ENCODE measurements at regions of chr1 and their contacts with region 1.

Region 1: DNA sequence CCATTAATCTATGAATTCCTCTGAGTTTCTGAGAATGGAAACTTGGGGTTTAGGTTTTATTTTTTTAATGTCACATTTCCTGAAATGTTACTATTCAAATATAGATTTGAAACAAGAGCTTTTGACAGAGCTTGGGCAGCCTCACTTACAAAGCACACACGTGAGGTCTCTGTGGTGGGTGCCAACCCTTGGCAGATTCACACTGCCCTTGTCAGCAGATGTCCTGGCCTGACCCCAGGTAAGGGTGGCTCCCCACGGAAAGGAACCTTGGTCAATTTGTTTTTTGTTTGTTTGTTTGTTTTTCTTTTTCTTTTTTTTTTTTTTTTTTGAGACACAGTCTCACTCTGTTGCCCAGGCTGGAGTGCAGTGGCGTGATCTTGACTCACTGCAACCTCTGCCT is 53.5 kb downstream of the FAAP20 start:
- DNase-seq: no peak
- H3K4me3 Mint-ChIP-seq: no peak overlapping the region
- H3K27ac Mint-ChIP-seq: no peak overlapping the region
- H3K4me1 Mint-ChIP-seq: peaks cover 10% of the 10 kb centered on the region
- H3K27me3 Mint-ChIP-seq: no peaks in the 10 kb centered on the region

Region 2: GRCh38 chr1:2025534-2025981 is 115.5 kb before region 1 on chr1:
- CTCF ChIA-PET with region 1: no interaction called
- POLR2A ChIA-PET with region 1: no interaction called
- intact Hi-C with region 1: no loop called
- DNase-seq: no peak
- H3K4me3 Mint-ChIP-seq: no peak overlapping the region
- H3K27ac Mint-ChIP-seq: no peak overlapping the region
- H3K4me1 Mint-ChIP-seq: no peaks in the 10 kb centered on the region
- H3K27me3 Mint-ChIP-seq: peaks cover 23% of the 10 kb centered on the region

Region 3: GRCh38 chr1:2091611-2092604 is 49.1 kb before region 1 on chr1:
- CTCF ChIA-PET with region 1: interaction called, 12 read pairs
- POLR2A ChIA-PET with region 1: no interaction called
- intact Hi-C with region 1: loop called (anchors 1 kb)
- DNase-seq: peak; percentile 67
- H3K4me3 Mint-ChIP-seq: no peak overlapping the region
- H3K27ac Mint-ChIP-seq: no peak overlapping the region
- H3K4me1 Mint-ChIP-seq: peaks cover 3% of the 10 kb centered on the region
- H3K27me3 Mint-ChIP-seq: no peaks in the 10 kb centered on the region

Region 4: DNA sequence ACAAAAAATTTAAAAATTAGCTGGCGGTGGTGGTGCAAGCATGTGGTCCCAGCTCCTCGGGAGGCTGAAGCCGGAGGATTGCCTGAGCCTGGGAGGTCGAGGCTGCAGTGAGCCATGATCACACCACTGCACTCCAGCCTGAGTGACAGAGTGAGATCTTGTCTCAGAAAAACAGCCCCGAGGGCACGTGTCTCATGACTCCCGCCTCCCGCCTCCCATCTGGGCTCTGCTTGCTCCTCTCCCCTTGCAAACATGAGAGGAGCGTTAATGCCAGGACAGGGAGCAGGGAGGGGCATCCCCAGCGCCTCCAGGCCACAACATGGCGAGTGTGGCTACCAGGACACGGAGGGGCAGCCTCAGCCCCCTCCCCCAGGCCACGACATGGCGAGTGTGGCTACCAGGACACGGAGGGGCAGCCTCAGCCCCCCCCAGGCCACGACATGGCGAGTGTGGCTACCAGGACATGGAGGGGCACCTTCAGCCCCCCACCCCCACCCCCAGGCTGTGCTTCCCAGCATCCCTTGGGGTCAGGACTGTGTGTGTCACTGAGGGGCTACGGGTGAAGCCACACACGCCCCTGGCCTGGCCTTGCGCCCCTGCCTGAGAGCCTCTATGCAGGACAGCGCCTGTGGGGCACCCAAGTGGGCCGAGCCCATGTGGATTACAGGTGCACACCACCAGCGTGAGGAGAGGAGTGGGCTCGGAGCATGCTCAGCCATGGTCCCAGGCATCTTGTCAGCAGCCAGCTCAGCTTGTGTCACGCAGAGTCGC is 25.4 kb after region 1 on chr1:
- CTCF ChIA-PET with region 1: no interaction called
- POLR2A ChIA-PET with region 1: no interaction called
- intact Hi-C with region 1: no loop called
- DNase-seq: no peak
- H3K4me3 Mint-ChIP-seq: no peak overlapping the region
- H3K27ac Mint-ChIP-seq: no peak overlapping the region
- H3K4me1 Mint-ChIP-seq: no peaks in the 10 kb centered on the region
- H3K27me3 Mint-ChIP-seq: no peaks in the 10 kb centered on the region